ENCODE measurements at regions of chr2 and their contacts with region 1.

Region 1: GRCh38 chr2:207710814-207711740 is at the start of gene CCNYL1:
- DNase-seq: peak; percentile 99 to 100 (median 100)
- ATAC-seq: peak; percentile 99 to 100 (median 100)
- H3K4me3 ChIP-seq: peak within 1 kb of the TSS; percentile 72 to 97 (median 90)
- H3K27ac ChIP-seq: peak within 1 kb of the TSS; percentile 79 to 95 (median 90)
- H3K4me1 ChIP-seq: peaks cover 0 to 28% (median 13%) of the 10 kb centered on the region in 12 donors
- H3K27me3 ChIP-seq: no peaks in the 10 kb centered on the region
- CTCF ChIP-seq: peak in 9 of 12 donors; percentile 14 to 56 (median 31)
- POLR2A ChIP-seq: peak; percentile 59 to 95
- total RNA-seq, gene CCNYL1: 4.5 to 17.5 (median 10.9) TPM

Region 2: GRCh38 chr2:206765242-206766056 is 945.6 kb before region 1 on chr2 and contains the starts of genes FASTKD2 and MDH1B:
- intact Hi-C with region 1: loop called in 1 of 10 experiments (anchors 10 kb)
- DNase-seq: peak; percentile 85 to 93 (median 91)
- ATAC-seq: peak; percentile 96 to 99 (median 98)
- H3K4me3 ChIP-seq: peak within 1 kb of the TSS; percentile 68 to 97 (median 84)
- H3K27ac ChIP-seq: peak within 1 kb of the TSS; percentile 82 to 95 (median 89)
- H3K4me1 ChIP-seq: peaks cover 3 to 43% (median 35%) of the 10 kb centered on the region in 12 donors
- H3K27me3 ChIP-seq: peaks cover 0 to 3% (median 0%) of the 10 kb centered on the region in 9 donors
- CTCF ChIP-seq: no peak
- POLR2A ChIP-seq: no peak
- total RNA-seq, gene FASTKD2: 32.6 to 48.0 (median 42.4) TPM
- total RNA-seq, gene MDH1B: 0.30 to 2.0 (median 1.1) TPM

Region 3: DNA sequence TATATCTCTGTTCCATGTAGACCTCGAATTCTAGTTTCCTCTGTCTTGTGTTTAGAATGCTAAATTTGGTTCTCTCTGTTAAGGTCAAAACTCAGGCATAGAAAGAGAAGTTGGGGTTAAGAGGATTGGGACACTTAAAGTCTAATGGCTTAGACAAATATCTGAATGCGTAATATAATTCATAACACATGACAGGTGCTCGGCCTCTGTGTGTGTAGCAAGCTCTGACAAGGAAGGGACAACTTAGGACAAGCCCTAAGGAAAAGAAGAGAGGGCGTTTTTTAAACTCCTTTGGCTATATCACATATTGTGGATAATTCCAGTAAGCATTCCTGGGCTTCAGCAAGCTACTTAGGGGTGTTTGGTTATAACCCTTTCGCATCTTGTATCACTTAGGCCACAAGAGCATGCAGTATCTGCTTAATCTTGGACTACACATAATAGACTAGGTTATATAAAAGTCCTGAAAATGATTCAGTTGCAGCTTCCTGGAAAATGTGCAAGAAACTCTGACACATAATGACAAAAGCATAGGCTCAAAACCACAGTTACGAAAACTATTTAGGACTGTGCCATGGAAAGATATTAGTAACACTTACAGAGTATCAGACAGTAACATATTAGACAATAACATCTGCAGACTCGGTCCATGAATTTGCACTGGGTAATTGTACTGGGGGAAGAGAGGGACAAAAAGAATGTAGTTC is 197.4 kb before region 1 on chr2:
- intact Hi-C with region 1: loop called in 1 of 10 experiments (anchors 10 kb)
- DNase-seq: no peak
- ATAC-seq: peak in 3 of 4 donors; percentile 59 to 62 (median 60)
- H3K4me3 ChIP-seq: no peak overlapping the region
- H3K27ac ChIP-seq: peak overlapping the region in 5 of 12 donors; percentile 15 to 58 (median 37)
- H3K4me1 ChIP-seq: peaks cover 0 to 13% (median 0%) of the 10 kb centered on the region in 12 donors
- H3K27me3 ChIP-seq: no peaks in the 10 kb centered on the region
- CTCF ChIP-seq: no peak
- POLR2A ChIP-seq: no peak

Measured in heart left ventricle (tissue), 16 donors.